Cardiac septum (tissue), 1 donor: ENCODE measurements at regions of chr10 and their contacts with region 1.

Region 1: GRCh38 chr10:11611248-11612020 is at the start of gene USP6NL:
- DNase-seq: peak; percentile 96
- total RNA-seq, gene USP6NL: 10.5 TPM

Region 2: DNA sequence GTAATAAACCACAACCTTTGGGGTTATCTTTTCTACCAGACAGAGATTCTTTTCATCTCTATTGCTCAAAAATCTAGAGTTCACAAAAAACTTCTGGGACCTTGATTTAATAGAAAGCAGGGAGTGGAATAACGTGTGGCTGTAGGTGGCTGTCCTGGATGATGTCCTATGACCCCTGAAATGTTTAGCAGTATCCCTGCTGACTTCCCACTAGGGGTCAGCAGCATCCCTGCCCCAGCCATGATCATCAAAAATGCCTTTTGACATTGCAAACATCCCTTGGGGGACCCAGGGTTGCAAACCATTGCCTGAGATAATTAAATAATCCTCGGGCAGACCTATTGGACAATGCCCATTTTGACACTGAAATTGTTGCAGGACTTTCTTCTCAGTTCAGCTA is 177.1 kb before region 1 on chr10:
- intact Hi-C with region 1: no loop called
- DNase-seq: peak; percentile 19

Region 3: DNA sequence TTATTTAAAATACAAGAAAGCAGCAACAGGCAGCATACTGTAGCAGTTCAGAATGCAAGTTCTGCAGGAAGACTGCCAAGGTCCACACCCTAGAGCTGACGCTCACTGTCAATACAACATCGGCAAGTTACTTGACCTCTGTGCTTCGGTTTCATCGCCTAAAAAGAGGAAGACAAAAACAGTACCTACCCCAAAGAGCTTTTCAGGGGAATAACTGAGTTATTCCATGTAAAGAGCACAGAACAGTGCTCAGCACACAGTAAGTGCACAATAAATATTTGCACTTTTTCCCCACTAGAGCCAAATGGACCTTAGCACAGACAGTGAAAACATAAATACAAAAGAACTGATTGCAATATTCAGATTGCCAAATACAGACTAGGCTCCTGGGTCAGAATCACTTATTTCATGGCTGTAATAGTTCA is 88.6 kb before region 1 on chr10:
- intact Hi-C with region 1: loop called (anchors 5 kb)
- DNase-seq: no peak

Region 4: DNA sequence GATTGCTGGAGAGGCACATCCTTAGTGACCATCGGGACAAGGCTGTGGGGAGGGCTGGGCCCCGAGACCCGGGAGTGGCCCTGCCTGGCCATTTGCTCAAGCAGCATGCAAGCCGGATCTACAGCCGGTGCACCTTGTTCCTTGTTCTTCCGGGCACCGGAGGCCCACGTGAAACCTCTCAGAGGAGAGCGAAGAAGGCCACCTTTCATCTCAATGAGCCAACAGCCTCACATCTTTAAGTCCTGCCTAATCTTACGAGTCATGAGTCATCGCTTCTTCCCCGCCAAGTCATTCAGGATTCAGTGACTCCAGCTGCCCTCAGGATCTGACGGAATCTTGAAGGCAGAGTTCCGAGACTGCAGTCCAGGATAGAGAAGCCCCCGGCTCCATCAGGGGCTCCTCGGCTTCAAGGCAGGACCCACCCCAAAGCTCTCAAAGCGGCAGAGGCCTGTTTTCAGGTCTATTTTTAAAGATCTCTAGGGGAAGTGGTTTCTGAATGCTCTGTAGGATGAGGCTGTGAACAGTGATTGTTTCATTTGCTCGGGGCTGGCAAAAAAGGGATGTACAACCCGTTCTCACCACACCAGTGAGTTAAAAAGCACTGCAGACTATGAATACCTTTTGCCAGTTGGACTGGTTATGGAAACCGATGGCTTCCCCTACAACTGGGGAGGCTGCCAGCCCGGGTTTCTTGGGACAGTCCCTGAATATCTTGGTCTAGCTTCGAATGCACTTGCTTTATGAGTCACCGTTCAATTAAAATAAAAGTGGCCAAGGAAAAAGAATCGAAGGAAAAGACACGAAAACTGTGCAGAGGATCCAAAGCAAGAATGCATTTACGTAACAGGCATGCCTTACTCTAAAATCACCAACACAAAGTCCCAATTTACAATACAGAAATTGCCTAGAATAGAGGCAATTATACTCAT is 73.5 kb after region 1 on chr10:
- intact Hi-C with region 1: loop called (anchors 5 kb)
- DNase-seq: peak; percentile 81